Colonic mucosa (tissue), 4 donors: ENCODE measurements at regions of chr12 and their contacts with region 1.

Region 1: DNA sequence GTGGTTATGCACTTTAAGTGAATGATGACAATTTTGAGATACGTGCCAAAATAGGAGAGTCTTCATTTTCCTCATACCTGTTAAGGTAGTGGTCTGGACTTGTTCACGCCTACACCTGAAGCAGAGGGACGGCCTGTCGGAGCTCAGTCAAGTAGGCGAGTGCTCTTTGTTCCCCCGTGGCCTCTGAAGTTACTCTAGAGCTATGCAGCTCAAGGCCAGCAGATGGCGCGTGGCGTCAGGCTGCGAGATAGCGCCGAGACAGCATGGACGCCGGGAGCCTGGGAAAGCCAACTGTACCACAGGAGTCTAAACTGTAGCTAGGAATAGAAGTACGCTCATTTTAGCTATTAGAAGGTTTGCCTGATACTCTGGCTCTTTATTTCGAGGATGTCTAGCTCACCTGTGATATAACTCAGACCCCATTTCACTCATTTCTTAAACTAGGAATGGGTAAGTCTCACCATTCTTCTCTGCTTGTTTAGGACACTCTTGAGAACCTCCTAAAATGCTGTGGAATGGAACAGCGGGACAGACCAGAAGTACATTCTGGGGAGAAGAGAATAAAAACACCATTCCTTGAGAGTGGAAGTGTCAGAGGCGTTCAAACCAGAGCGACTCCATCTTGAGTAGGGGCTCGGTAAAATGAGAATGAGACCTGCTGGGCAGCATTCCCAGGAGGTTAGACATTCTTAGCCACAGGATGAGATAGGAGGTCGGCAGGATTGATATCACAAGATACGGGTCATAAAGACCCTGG is 267.4 kb upstream of the HMGA2 start:
- DNase-seq: peak; percentile 82
- H3K4me3 ChIP-seq: no peak overlapping the region
- H3K27ac ChIP-seq: no peak overlapping the region
- H3K4me1 ChIP-seq: no peaks in the 10 kb centered on the region
- H3K27me3 ChIP-seq: no peaks in the 10 kb centered on the region
- CTCF ChIP-seq: peak; percentile 87

Region 2: DNA sequence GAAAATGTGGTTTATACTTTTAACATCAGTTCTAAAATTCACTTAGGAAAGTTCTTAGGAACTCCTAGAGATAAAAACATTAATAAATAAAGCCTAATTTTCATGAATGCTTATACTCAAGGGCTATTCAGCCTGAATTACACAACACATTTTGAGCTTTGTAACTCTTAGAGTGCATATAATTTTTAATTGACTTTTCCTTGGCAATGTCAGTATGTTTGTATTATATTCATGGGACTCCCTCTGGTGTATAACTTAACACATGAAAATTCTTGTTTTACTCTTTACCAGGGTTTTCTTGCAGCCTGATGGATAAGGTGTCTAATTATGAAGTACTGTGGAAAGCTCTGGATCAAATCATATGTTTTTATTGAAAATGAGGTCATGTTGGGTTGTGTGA is 116.9 kb after region 1 on chr12:
- intact Hi-C with region 1: loop called (anchors 5 kb)
- DNase-seq: no peak
- H3K4me3 ChIP-seq: no peak overlapping the region
- H3K27ac ChIP-seq: no peak overlapping the region
- H3K4me1 ChIP-seq: no peaks in the 10 kb centered on the region
- H3K27me3 ChIP-seq: no peaks in the 10 kb centered on the region
- CTCF ChIP-seq: peak; percentile 19